AG04449 (cell line): ENCODE measurements at regions of chr7 and their contacts with region 1.

Region 1: GRCh38 chr7:65307651-65308299 is 65.9 kb upstream of the ZNF92 start:
- DNase-seq: peak; percentile 7
- H3K4me3 ChIP-seq: no peak overlapping the region
- CTCF ChIP-seq: peak; percentile 62

Region 2: DNA sequence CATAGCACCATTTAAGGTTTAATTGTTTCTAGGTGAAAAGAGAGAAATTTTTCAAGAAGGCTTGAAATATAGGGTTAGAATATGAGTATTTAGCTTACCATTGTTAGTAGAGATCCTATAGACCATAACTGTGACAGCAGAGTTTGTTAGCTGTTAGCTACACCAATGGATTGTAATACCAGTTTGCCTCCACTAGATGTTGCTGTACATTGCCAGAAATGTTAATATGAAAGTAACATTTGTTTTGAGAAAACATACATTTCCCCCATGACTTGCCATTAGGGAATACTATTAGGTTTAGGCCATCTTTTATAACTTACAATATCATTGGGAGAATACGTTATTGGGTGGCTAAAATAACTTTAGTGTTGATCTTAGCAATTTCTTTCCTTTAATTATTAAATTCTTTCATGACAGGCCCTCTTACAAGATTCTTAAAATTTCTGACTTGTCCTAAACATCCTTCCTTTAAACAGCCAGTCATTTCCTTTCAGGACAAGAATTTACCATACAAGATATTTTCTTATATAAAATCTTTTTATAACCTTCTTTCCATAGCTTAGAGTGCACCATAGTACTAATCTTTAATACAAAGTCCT is 356.4 kb before region 1 on chr7:
- CTCF ChIA-PET with region 1: interaction called, 89 read pairs
- POLR2A ChIA-PET with region 1: interaction called, 4 read pairs
- DNase-seq: peak; percentile 4
- H3K4me3 ChIP-seq: no peak overlapping the region
- CTCF ChIP-seq: peak; percentile 65

Region 3: GRCh38 chr7:65276822-65277221 is 31.0 kb before region 1 on chr7:
- CTCF ChIA-PET with region 1: no interaction called
- POLR2A ChIA-PET with region 1: no interaction called
- DNase-seq: no peak
- H3K4me3 ChIP-seq: no peak overlapping the region
- CTCF ChIP-seq: no peak

Region 4: DNA sequence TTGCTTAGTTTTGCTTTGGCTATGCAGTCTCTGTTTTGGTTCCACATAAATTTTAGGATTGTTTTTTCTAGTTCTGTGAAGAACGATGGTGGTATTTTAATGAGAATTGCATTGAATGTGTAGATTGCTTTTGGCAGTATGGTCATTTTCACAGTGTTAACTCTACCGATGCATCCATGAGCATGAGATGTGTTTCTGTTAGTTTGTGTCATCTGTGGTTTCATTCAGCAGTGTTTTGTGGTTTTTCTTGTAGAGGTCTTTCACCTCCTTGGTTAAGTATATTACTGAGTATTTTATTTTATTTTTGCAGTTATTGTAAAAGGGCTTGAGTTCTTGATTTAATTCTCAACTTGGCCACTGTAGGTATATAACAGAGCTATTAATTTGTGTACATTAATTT is 12.4 kb before region 1 on chr7:
- CTCF ChIA-PET with region 1: interaction called, 21 read pairs
- POLR2A ChIA-PET with region 1: no interaction called
- DNase-seq: no peak
- H3K4me3 ChIP-seq: no peak overlapping the region
- CTCF ChIP-seq: no peak

Region 5: GRCh38 chr7:65325793-65326432 is 18.1 kb after region 1 on chr7:
- CTCF ChIA-PET with region 1: interaction called, 10 read pairs
- POLR2A ChIA-PET with region 1: no interaction called
- DNase-seq: no peak
- H3K4me3 ChIP-seq: no peak overlapping the region
- CTCF ChIP-seq: no peak